Stomach (tissue), 19 donors: ENCODE measurements at regions of chr4 and their contacts with region 1.

Region 1: DNA sequence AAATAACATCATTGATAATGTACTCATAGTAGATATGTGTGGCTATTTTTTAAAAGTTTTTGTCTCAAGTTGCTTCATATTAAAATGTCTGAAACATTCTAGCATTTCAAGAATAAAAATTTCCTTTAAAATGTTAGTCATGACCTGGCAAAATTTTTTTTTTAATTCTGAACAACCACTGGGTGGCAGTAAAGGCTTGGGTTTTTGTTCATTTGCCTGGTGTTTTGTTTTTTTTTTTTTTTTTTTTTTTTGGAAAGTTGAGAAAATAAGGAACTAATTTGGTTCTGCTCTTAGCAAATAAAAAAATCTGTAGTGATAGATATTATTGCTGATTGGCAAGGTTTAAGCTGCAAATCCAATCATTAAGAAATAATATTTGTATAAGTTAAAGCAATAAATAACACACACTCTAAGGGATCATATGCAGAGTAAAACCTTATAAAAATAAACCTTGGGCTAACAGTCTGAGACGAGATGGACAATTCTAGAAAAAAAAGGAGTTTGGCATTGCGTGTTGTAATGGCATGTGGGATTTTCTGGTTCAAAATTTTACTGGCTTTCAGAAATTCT is 81.4 kb downstream of the CEP44 start:
- DNase-seq: peak in 1 of 2 donors; percentile 77
- H3K4me3 ChIP-seq: no peak overlapping the region
- H3K27ac ChIP-seq: no peak overlapping the region
- H3K4me1 ChIP-seq: peaks cover 0 to 3% (median 2%) of the 10 kb centered on the region in 4 donors
- H3K27me3 ChIP-seq: no peaks in the 10 kb centered on the region
- CTCF ChIP-seq: peak in 4 of 7 experiments; percentile 39 to 55 (median 44)
- EP300 ChIP-seq: no peak
- POLR2A ChIP-seq: no peak

Region 2: DNA sequence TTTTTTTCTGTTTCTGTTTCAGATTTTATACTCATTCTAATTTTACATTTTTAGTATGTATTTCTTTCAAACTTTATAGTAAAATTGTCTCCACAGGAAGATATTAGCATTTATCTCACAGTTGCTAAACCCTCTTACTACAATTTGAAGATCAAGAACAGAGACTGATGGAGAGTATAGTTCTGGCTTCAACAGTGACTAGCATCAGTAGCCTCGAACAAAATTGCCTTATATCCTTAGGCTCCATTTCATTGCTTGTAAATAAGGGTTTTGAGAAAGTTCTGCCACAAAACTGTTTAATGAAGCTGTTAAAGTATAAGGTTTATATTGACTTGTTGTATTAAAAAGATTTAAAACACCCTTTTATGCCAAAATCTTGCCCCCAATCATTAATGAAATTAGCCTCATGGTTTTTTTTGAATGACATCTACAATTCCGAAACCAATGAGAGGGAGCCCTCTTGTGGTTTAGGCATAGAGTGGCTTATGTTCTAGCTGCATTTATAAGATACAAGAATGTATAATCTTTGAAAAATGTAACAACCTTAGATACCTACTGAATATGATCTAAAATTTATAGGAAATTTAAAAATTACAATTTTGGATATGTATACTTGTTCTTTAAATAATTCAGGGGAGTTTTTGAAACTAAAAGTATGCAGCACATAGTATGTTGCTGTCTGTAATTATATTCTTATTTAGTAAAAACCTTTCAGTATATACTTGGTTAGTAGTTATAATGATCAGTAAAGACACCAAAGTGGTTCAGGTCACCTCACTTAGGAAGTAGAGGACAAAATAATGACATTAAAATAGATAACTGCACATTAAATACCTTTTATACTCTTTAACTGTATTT is 267.0 kb after region 1 on chr4:
- intact Hi-C with region 1: loop called (anchors 5 kb)
- DNase-seq: peak in 1 of 2 donors; percentile 81
- H3K4me3 ChIP-seq: no peak overlapping the region
- H3K27ac ChIP-seq: no peak overlapping the region
- H3K4me1 ChIP-seq: peaks cover 0 to 35% (median 10%) of the 10 kb centered on the region in 4 donors
- H3K27me3 ChIP-seq: no peaks in the 10 kb centered on the region
- CTCF ChIP-seq: peak in 4 of 7 experiments; percentile 63 to 76 (median 65)
- EP300 ChIP-seq: no peak
- POLR2A ChIP-seq: no peak

Region 3: GRCh38 chr4:174714393-174715211 is 349.5 kb after region 1 on chr4:
- intact Hi-C with region 1: loop called (anchors 10 kb)
- DNase-seq: peak; percentile 36 to 57
- H3K4me3 ChIP-seq: no peak overlapping the region
- H3K27ac ChIP-seq: no peak overlapping the region
- H3K4me1 ChIP-seq: peaks cover 0 to 10% (median 0%) of the 10 kb centered on the region in 4 donors
- H3K27me3 ChIP-seq: no peaks in the 10 kb centered on the region
- CTCF ChIP-seq: peak in 5 of 7 experiments; percentile 29 to 63 (median 34)
- EP300 ChIP-seq: no peak
- POLR2A ChIP-seq: no peak